OCI-LY7 (cell line): ENCODE measurements at regions of chr17 and their contacts with region 1.

Region 1: GRCh38 chr17:39527220-39527813 is 66.0 kb downstream of the CDK12 start:
- DNase-seq: peak; percentile 39
- H3K4me3 ChIP-seq: no peak overlapping the region
- H3K27ac ChIP-seq: no peak overlapping the region
- H3K4me1 ChIP-seq: peaks cover 4% of the 10 kb centered on the region
- CTCF ChIP-seq: peak; percentile 78

Region 2: DNA sequence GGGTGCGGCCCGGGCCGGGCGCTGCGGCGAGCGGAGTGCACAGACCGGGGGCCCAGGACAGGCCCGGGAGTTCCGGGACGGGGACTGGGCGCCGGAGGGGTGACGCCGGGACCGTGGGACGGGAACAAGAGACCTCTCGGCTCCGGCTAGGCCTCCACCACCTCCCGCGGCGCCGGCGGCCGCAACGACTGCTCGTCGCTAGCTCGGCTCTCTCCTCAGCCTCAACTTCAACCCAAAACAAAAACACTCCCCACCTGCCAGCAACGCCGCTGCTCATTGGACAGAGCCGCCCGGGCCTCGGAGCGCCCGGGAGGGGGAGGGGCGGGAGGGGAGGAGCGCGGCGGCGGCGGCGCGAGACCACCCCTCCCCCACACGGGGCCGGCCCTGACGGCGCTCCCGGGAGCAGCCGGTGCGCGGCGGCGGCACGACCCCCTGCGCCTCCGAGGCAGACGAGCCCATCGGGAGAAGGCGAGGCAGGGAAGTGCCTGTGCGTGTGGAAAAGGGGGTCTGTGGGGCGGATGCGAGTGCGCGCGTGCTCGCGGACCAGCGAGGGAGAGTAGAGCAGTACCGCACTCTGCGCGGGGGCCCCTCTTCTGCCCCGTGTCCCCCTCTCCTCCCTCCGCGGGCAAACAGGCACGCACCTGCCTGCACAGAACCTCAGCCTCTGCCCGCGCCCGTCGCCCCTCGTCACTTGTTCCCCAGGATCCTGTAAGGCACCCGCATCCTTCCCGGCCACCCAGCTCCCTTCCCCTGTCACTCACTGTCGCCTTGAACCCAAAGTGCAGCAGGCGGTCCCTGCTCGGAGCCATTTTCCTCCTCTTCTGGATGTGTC is 125.7 kb before region 1 on chr17 and contains the start of gene FBXL20:
- CTCF ChIA-PET with region 1: no interaction called
- POLR2A ChIA-PET with region 1: no interaction called
- intact Hi-C with region 1: loop called (anchors 10 kb)
- DNase-seq: peak; percentile 92
- H3K4me3 ChIP-seq: peak within 1 kb of the TSS; percentile 84
- H3K27ac ChIP-seq: peak within 1 kb of the TSS; percentile 52
- H3K4me1 ChIP-seq: peaks cover 10% of the 10 kb centered on the region
- CTCF ChIP-seq: no peak
- total RNA-seq, gene FBXL20: 2.1 and 2.2 TPM in 2 replicates